Right ventricle myocardium inferior (tissue), 1 donor: ENCODE measurements at regions of chr11 and their contacts with region 1.

Region 1: GRCh38 chr11:112086422-112087191 is at the starts of genes SDHD and TIMM8B:
- DNase-seq: peak; percentile 96
- ATAC-seq: peak; percentile 96
- total RNA-seq, gene SDHD: 281 TPM
- total RNA-seq, gene TIMM8B: 176 TPM

Region 2: GRCh38 chr11:111926505-111927391 is 159.9 kb before region 1 on chr11:
- intact Hi-C with region 1: loop called (anchors 5 kb)
- DNase-seq: peak; percentile 98
- ATAC-seq: peak; percentile 96

Region 3: DNA sequence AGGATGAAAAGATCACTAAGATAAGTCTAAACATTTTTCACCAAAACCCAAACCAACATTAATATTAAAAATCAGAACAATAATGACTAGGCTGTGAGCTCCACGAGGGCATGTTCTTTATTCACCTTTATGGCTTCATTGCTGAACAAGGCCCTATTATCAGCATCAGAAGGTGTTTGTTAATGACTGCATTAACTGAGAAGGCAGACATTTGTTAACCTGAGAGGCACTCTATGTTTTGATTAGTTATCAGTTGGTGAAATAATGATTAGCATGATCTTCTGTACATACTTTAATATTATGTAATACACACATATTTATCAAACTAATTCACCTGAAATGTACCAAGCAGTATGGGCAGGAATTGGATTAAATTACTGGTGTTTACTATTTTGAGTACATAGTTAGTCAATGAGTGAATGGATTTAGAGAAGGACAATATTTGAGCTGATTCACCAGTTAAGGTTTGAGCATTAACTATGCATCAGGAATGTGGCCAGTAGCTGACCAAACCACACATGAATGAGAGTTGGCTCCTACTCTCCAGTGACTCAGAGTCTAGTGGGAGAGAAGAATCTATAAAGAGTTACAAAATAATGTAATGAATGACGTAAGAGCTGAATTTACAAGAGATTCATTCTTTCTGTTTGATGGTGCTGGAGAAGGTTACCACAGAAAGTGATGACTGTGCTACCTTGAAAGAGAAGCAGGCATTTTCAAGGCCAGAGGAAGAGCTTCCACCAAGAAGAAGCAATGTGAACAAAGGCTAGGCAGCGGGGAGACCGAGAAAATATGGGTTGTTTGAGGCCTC is 70.6 kb after region 1 on chr11:
- intact Hi-C with region 1: no loop called
- DNase-seq: no peak
- ATAC-seq: no peak